OCI-LY7 (cell line): ENCODE measurements at regions of chr14 and their contacts with region 1.

Region 1: GRCh38 chr14:100067971-100068959 is 3.0 kb downstream of the EVL start:
- DNase-seq: peak; percentile 75
- H3K4me3 ChIP-seq: peak overlapping the region; percentile 74
- H3K27ac ChIP-seq: peak overlapping the region; percentile 99
- H3K4me1 ChIP-seq: peaks cover 97% of the 10 kb centered on the region
- CTCF ChIP-seq: no peak

Region 2: DNA sequence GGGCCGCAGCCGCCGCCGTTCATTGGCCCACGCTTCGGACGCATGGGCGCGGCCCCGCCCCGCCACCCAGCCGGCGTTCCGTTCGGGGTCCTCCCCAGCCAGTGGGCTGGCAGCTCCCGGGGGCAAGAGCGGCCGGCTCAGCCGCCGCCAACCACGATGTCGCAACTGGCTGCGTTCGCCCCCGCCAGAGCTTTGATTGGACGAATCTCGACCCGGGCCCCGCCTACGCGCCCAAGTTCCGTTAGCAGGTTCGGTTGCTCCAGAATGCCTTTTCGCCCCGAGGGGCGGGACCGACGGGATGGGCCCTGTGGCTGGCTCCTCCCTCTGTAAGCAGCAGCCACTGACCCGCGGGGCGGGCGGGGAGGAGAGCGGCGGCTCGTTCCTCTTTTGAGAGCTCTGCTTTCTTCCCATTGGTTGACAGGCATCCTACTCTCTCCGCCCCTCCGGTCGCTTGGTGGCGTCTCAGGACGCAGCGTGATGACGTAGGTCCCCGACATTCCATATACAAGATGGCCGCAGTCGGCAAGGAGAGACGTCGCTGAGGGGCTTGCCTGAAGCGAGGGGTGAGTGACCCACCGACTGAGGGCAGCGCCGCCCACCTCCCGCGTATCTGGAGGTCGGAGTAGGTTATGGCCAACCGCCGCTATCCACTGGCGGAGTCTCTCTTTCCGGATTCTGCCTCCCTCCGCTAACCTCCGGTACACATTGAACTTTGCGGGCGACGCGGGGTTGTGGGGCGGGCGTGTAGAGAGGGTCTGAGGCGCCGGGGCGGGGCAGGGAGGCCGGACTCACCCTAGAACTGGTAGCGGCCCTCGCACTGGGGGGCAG is 587.1 kb before region 1 on chr14 and contains the start of gene CCNK:
- CTCF ChIA-PET with region 1: no interaction called
- POLR2A ChIA-PET with region 1: no interaction called
- intact Hi-C with region 1: loop called (anchors 10 kb)
- DNase-seq: peak; percentile 100
- H3K4me3 ChIP-seq: peak within 1 kb of the TSS; percentile 95
- H3K27ac ChIP-seq: peak within 1 kb of the TSS; percentile 38
- H3K4me1 ChIP-seq: peaks cover 23% of the 10 kb centered on the region
- CTCF ChIP-seq: no peak
- total RNA-seq, gene CCNK: 25.1 and 38.8 TPM in 2 replicates

Region 3: GRCh38 chr14:99546234-99546879 is 521.9 kb before region 1 on chr14:
- CTCF ChIA-PET with region 1: no interaction called
- POLR2A ChIA-PET with region 1: no interaction called
- intact Hi-C with region 1: no loop called
- DNase-seq: no peak
- H3K4me3 ChIP-seq: no peak overlapping the region
- H3K27ac ChIP-seq: no peak overlapping the region
- H3K4me1 ChIP-seq: no peaks in the 10 kb centered on the region
- CTCF ChIP-seq: no peak

Region 4: DNA sequence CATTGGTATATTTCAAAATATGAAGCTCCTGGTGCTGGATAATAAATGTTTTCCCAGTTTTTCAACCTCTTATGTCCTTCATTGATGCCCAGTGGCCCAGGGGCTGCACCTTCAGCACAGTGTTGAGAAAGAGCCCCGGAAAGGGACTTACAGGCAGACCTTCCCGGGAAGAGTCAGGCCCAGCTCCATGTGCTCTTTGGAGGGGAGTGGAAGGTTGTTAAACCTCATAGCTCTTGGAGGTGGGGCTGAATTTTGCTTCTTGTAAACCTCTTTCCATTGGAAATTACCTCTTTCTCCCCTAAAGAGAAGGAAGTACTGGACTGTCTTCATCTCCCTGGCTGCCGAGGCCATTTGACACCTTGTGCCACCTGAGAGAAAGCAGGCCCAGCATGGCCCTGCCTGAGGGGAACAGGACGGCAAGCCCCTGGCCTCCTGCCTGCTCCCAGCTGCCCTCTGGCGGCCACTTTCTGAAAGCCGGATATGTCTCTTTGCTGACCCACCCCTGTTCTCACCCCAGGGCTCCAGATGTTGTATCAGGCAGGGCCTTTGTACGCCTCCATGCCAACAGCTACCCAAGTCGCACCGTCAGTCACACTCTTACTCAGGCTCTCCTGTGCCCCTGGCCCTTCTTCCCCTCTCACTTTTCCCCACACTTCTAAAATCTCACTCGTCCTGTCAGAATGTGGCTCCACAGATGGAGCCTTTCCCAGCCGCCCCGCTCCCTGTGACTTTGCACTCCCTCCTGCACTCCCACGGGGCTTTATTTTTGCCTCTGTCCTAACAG is 40.0 kb after region 1 on chr14:
- CTCF ChIA-PET with region 1: interaction called, 3 read pairs
- POLR2A ChIA-PET with region 1: interaction called, 5 read pairs
- intact Hi-C with region 1: loop called (anchors 2 kb)
- DNase-seq: peak; percentile 73
- H3K4me3 ChIP-seq: no peak overlapping the region
- H3K27ac ChIP-seq: no peak overlapping the region
- H3K4me1 ChIP-seq: peaks cover 8% of the 10 kb centered on the region
- CTCF ChIP-seq: peak; percentile 89

Region 5: DNA sequence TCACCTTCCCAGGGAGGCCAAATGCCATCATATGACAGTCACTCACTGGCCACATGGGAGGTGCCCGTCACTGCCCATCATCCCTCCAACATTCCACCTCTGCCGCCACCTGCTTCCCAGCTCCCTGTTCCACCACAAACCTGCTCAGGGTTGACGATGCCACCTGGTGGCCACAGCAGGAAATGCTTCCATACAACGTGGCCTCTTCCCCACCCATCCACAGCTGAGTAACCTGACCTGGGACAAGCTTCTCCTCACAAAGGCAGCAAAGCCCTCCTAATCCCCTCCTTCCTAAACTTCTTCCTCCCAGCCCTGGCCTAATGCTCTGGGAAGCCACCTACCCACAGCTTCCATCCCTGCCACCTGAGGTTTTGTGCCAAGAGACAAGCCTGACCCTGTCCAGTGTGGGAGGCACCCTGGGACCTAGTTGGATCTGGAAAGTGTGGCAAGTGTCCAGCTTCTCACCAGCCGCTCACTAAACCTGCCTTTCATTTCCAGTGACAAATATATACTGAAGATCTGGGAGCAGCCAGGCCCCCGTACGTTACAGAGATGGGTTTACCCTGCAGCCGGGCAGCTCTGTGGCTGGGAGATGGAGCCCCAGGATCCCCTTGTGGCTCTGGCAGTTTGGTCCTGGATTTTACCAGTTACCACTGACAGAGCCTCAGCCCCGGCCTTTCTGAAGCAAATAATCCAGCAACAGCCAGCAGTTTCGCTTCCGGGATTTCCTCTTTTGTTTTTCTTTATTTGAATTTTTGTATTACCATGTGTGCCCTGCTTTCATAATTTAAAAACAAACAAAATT is 87.0 kb after region 1 on chr14:
- CTCF ChIA-PET with region 1: no interaction called
- POLR2A ChIA-PET with region 1: interaction called, 6 read pairs
- intact Hi-C with region 1: loop called (anchors 5 kb)
- DNase-seq: peak; percentile 54
- H3K4me3 ChIP-seq: no peak overlapping the region
- H3K27ac ChIP-seq: no peak overlapping the region
- H3K4me1 ChIP-seq: peaks cover 32% of the 10 kb centered on the region
- CTCF ChIP-seq: peak; percentile 91